A549 (cell line): ENCODE measurements at regions of chr20 and their contacts with region 1.

Region 1: DNA sequence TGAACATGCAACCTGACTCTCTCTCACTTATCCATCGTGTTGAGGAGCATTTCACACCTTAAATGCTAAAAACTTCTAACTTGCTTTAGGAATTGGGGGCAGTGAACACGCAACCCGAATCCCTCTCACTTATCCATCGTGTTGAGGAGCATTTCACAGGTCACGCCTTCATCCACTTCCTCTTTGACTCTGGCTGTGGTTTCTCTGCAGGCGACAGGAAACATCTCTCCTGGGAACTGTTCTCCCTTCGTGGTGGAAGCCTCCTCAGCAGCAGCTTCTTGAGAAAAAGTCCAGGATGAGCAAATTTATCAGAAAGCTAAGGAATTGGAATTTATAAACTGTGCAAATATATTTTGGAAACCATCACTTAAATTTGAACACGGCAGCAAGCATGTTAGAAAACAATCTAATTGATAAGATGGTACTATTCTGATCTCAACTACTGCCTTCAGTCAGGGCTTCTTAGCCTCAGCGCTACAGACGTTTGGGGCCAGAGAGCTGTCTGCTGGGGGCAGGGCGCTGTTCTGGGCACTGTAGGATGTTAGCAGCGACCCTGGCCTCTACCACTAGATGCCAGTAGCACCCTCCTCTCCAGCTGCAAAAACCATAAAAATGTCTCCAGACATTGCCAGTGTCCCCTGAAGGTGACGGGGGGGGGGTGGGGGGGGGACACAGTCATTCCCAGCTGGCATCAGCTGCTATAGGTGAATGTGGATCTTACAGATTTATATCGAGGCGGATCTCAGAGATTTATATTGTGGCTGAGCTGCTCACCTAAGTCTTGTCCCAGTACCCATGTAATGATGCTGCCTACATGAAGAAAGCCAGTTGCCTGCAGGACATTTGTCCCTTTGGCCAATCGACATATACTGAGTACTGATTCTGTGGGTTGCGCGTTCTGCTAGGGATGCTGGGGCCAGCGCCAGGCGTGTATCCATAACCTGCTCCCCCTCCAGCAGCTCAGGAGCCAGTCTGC is 26.2 kb downstream of the CTCFL start:
- DNase-seq: peak in 1 of 2 experiments; percentile 40
- ATAC-seq: peak; percentile 84 to 89
- H3K4me3 ChIP-seq: no peak overlapping the region
- H3K27ac ChIP-seq: no peak overlapping the region
- H3K4me1 ChIP-seq: no peaks in the 10 kb centered on the region
- CTCF ChIP-seq: peak; percentile 45
- EP300 ChIP-seq: no peak
- POLR2A ChIP-seq: no peak
- RAD21 ChIP-seq: peak; percentile 54 to 56

Region 2: DNA sequence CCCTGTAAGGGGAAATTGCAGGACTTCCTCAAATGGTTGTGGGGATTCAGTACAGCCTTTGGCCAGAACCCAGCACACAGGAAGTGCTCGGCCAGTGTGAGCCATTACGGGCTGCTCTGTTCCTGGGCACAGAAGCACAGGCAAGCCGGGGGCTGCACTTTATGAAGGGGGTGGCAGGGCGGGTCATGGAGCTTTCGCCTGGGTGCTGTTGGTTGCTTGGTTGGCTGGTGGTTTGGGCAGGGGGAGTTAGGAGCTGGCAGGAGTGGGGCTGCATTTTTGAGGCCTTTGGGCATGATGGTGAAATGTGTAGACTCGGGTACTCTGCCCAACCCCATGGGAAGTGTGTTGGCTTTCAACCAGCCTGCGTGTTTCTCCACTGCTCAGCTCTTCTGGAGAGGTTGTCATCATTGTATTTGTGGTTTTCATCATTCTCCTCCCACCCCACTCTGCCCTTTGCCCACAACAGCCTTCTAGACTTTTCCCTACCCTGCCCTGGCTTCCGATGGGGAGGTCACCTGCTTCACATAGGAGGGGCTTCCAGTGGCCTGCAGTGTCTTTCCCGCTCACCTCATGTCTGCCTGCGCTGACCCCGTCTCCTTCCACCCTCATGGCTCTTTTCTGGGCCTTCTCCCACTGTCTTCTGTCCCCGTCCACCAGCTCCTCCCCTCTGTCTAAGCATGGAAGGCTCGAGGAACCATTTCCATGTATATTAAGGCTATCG is 123.6 kb before region 1 on chr20:
- CTCF ChIA-PET with region 1: interaction called, 97 read pairs
- POLR2A ChIA-PET with region 1: no interaction called
- DNase-seq: no peak
- ATAC-seq: 0 out of 6 replicates have a peak, but pooled peaks of 1 of the 2 experiments have one; percentile 5
- H3K4me3 ChIP-seq: no peak overlapping the region
- H3K27ac ChIP-seq: no peak overlapping the region
- H3K4me1 ChIP-seq: no peaks in the 10 kb centered on the region
- CTCF ChIP-seq: no peak
- EP300 ChIP-seq: no peak
- POLR2A ChIP-seq: no peak
- RAD21 ChIP-seq: no peak